SK-N-SH (cell line): ENCODE measurements at regions of chr7 and their contacts with region 1.

Region 1: GRCh38 chr7:127792528-127793342 is 140.7 kb downstream of the SND1 start:
- DNase-seq: no peak
- H3K4me3 ChIP-seq: no peak overlapping the region
- H3K27ac ChIP-seq: peak overlapping the region in 1 of 2 experiments; percentile 16; a peak in 1 of 4 replicates
- H3K4me1 ChIP-seq: peaks cover 12% of the 10 kb centered on the region in 2 experiments; a peak in 2 of 4 replicates
- H3K27me3 ChIP-seq: no peaks in the 10 kb centered on the region
- CTCF ChIP-seq: peak; percentile 63
- EP300 ChIP-seq: no peak
- RAD21 ChIP-seq: peak; percentile 35; the same call in 1 of the 2 replicates

Region 2: DNA sequence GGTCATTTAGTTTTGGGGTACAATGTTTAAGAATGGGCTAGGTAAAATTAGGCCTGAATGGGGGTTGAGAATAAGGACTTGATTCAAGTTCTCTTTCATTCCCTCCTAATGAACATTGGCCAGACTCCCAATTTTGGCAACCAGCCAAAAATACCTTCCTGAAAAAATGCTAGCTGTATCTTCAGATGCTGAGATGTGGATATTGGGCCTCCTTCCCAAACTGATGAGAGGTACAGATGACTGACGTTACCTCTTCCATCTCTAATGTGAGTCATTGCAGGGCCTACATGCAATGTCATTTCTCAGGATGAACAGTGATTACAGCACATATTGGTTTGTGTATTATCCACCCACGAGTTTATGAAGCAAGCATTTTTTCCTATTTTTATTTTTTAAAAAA is 10.9 kb after region 1 on chr7:
- CTCF ChIA-PET with region 1: interaction called, 17 read pairs
- POLR2A ChIA-PET with region 1: no interaction called
- DNase-seq: peak; percentile 42
- H3K4me3 ChIP-seq: no peak overlapping the region
- H3K27ac ChIP-seq: peak overlapping the region in 1 of 2 experiments; percentile 80; a peak in 1 of 4 replicates
- H3K4me1 ChIP-seq: peaks cover 3 to 31% of the 10 kb centered on the region in 2 experiments; a peak in 3 of 4 replicates
- H3K27me3 ChIP-seq: no peaks in the 10 kb centered on the region
- CTCF ChIP-seq: no peak
- EP300 ChIP-seq: peak; percentile 17 to 41; a peak in 1 of 4 replicates
- RAD21 ChIP-seq: peak; percentile 2; the same call in 1 of the 2 replicates

Region 3: GRCh38 chr7:127884066-127884559 is 91.4 kb after region 1 on chr7:
- CTCF ChIA-PET with region 1: no interaction called
- POLR2A ChIA-PET with region 1: no interaction called
- DNase-seq: no peak
- H3K4me3 ChIP-seq: no peak overlapping the region
- H3K27ac ChIP-seq: no peak overlapping the region
- H3K4me1 ChIP-seq: peaks cover 7 to 39% of the 10 kb centered on the region in 2 experiments
- H3K27me3 ChIP-seq: no peaks in the 10 kb centered on the region
- CTCF ChIP-seq: peak; percentile 17; the same call in 1 of the 2 replicates
- EP300 ChIP-seq: no peak
- RAD21 ChIP-seq: no peak